ENCODE measurements at regions of chr6 and their contacts with region 1.

Region 1: DNA sequence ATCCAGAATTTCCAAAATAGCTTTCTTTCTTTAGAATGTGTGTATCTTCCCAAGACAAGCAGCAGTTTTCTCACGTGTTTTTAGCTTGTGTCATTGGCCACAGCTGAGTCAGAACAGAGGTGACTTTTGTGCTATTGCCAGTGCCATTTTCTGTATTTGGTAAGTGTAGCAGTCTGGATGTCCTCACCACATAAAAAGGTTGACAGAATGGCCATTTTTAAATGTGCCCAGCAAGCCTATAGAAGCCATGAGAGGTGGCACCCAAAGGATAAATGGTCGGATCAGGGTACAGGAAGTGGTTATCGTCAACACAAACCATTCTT is 269.5 kb upstream of the HSF2 start:
- DNase-seq: peak in 1 of 2 donors; percentile 52
- ATAC-seq: peak; percentile 41 to 89 (median 82)
- H3K4me3 ChIP-seq: no peak overlapping the region
- H3K27ac ChIP-seq: peak overlapping the region; percentile 40 to 86 (median 80)
- H3K4me1 ChIP-seq: peaks cover 0 to 35% (median 2%) of the 10 kb centered on the region in 9 donors
- H3K27me3 ChIP-seq: no peaks in the 10 kb centered on the region
- CTCF ChIP-seq: no peak

Region 2: GRCh38 chr6:121436960-121437850 is 692.8 kb before region 1 on chr6:
- intact Hi-C with region 1: loop called in 2 of 10 experiments (anchors 5 kb)
- DNase-seq: peak; percentile 50 to 53
- ATAC-seq: peak; percentile 56 to 72 (median 64)
- H3K4me3 ChIP-seq: peak overlapping the region; percentile 54 to 82 (median 72)
- H3K27ac ChIP-seq: peak overlapping the region; percentile 83 to 96 (median 90)
- H3K4me1 ChIP-seq: peaks cover 0 to 41% (median 18%) of the 10 kb centered on the region in 9 donors
- H3K27me3 ChIP-seq: peaks cover 0 to 35% (median 0%) of the 10 kb centered on the region in 7 donors
- CTCF ChIP-seq: no peak

Region 3: DNA sequence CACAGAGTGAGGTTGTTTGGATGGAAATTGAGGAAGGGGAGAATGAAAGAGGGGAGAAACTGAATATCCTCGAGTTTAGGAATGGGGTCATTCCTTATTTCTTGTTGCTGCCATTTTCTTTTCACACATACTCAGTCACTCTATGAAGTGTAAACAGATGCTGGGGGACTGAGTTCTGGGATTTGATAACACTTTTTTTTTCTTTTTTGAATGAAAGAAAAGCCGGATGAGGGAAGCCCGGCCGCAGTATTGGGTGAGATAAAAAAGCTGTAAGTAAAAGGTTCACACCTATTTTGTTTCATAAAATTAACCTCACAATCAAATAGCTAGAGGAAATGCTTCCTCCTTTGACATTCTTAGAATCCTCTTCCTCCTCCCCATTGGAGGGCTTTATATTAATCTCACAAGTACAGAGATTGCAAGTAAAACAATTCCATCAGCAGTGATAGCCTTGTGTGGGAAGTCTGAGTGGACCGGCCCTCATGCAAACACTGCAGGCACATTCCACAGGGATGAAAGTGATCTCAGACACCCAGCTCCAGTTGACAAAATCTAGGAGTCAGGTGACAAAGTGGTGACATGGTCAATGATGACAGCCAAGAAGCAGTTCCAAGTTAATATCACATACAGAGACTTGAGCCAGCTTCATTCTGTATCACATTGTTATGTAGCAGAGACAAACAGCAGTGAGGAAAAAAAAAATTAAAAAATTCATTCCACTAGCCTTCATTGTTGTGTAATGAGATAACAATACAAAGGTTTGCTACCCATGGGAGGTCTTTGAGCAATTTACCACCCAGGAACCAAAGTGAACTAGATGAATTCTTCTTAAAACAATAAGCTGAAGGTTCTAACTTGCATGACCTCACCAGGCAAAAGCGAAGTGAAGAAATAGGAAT is 121.6 kb before region 1 on chr6:
- intact Hi-C with region 1: loop called in 2 of 10 experiments (anchors 1 kb)
- DNase-seq: peak; percentile 13 to 66
- ATAC-seq: peak; percentile 91 to 99 (median 97)
- H3K4me3 ChIP-seq: no peak overlapping the region
- H3K27ac ChIP-seq: peak overlapping the region; percentile 11 to 82 (median 68)
- H3K4me1 ChIP-seq: peaks cover 0 to 32% (median 12%) of the 10 kb centered on the region in 9 donors
- H3K27me3 ChIP-seq: no peaks in the 10 kb centered on the region
- CTCF ChIP-seq: no peak

Measured in heart right ventricle (tissue), 16 donors.